ENCODE measurements at regions of chr1 and their contacts with region 1.

Region 1: GRCh38 chr1:115807723-115808122 is 33.2 kb downstream of the NHLH2 start:
- DNase-seq: peak; percentile 68
- H3K4me3 Mint-ChIP-seq: no peak overlapping the region
- H3K27ac Mint-ChIP-seq: no peak overlapping the region
- H3K4me1 Mint-ChIP-seq: peaks cover 14% of the 10 kb centered on the region
- H3K27me3 Mint-ChIP-seq: no peaks in the 10 kb centered on the region
- CTCF ChIP-seq: peak; percentile 43

Region 2: GRCh38 chr1:115980998-115981993 is 173.6 kb after region 1 on chr1:
- CTCF ChIA-PET with region 1: interaction called, 18 read pairs
- intact Hi-C with region 1: loop called (anchors 1 kb)
- DNase-seq: peak; percentile 30
- H3K4me3 Mint-ChIP-seq: no peak overlapping the region
- H3K27ac Mint-ChIP-seq: no peak overlapping the region
- H3K4me1 Mint-ChIP-seq: peaks cover 17% of the 10 kb centered on the region
- H3K27me3 Mint-ChIP-seq: no peaks in the 10 kb centered on the region
- CTCF ChIP-seq: peak; percentile 76

Region 3: GRCh38 chr1:116020668-116021275 is 213.0 kb after region 1 on chr1:
- CTCF ChIA-PET with region 1: interaction called, 3 read pairs
- intact Hi-C with region 1: loop called (anchors 1 kb)
- DNase-seq: peak; percentile 49
- H3K4me3 Mint-ChIP-seq: no peak overlapping the region
- H3K27ac Mint-ChIP-seq: no peak overlapping the region
- H3K4me1 Mint-ChIP-seq: no peaks in the 10 kb centered on the region
- H3K27me3 Mint-ChIP-seq: no peaks in the 10 kb centered on the region
- CTCF ChIP-seq: peak; percentile 47

Measured in Calu3 (cell line).